Activated CD4-positive, alpha-beta T cell treated with anti-CD3 and anti-CD28 coated beads for 36 hours (primary cell): ENCODE measurements at regions of chr4 and their contacts with region 1.

Region 1: GRCh38 chr4:41214136-41214824 is at the start of gene APBB2:
- DNase-seq: peak; percentile 79
- ATAC-seq: peak; percentile 67
- H3K4me3 Mint-ChIP-seq: peak within 1 kb of the TSS; percentile 72
- H3K27ac Mint-ChIP-seq: no peak within 1 kb of the TSS
- H3K4me1 Mint-ChIP-seq: peaks cover 27% of the 10 kb centered on the region
- H3K27me3 Mint-ChIP-seq: peaks cover 58% of the 10 kb centered on the region
- total RNA-seq, gene APBB2: 1.3 to 1.5 TPM

Region 2: DNA sequence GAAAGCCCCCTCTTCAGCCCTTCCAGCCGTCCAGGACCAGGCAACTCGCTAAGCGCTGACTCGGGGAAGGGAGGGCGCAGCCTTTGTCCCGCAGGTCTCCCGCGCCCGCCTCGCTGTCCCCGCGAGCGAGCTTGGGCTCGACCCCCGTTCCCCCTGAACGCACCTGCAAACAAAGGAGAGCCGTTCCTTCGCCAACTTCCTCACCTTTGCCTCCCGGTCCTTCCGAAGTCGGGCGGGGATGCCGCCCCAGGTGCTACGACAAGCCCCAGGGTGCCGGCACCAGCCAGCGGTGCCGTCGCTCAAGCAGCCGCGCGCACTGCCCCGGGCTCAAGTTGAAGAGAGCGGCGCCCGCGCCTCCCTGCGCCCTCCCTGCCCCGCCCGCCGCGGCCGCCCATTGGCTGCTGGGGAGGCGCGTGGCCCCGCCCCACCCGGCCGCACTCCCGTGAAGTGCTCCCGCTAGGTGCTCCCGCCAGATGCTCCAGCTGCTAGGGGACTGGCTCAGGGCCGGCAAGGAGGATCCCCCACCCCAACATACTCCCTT is 357.4 kb before region 1 on chr4:
- CTCF ChIA-PET with region 1: no interaction called
- POLR2A ChIA-PET with region 1: no interaction called
- intact Hi-C with region 1: no loop called
- DNase-seq: peak; percentile 79
- ATAC-seq: peak; percentile 99
- H3K4me3 Mint-ChIP-seq: peak overlapping the region; percentile 61
- H3K27ac Mint-ChIP-seq: no peak overlapping the region
- H3K4me1 Mint-ChIP-seq: peaks cover 8% of the 10 kb centered on the region
- H3K27me3 Mint-ChIP-seq: peaks cover 46% of the 10 kb centered on the region

Region 3: GRCh38 chr4:40908702-40909362 is 305.4 kb before region 1 on chr4:
- CTCF ChIA-PET with region 1: interaction called, 3 read pairs
- POLR2A ChIA-PET with region 1: no interaction called
- intact Hi-C with region 1: loop called in 1 of 2 experiments (anchors 1 kb)
- DNase-seq: peak; percentile 90
- ATAC-seq: peak; percentile 85
- H3K4me3 Mint-ChIP-seq: peak overlapping the region; percentile 26
- H3K27ac Mint-ChIP-seq: peak overlapping the region; percentile 95
- H3K4me1 Mint-ChIP-seq: peaks cover 36% of the 10 kb centered on the region
- H3K27me3 Mint-ChIP-seq: no peaks in the 10 kb centered on the region

Region 4: GRCh38 chr4:40976343-40976742 is 237.9 kb before region 1 on chr4:
- CTCF ChIA-PET with region 1: interaction called, 9 read pairs
- POLR2A ChIA-PET with region 1: no interaction called
- intact Hi-C with region 1: loop called (anchors 1 to 2 kb)
- DNase-seq: peak; percentile 18
- ATAC-seq: no peak
- H3K4me3 Mint-ChIP-seq: no peak overlapping the region
- H3K27ac Mint-ChIP-seq: no peak overlapping the region
- H3K4me1 Mint-ChIP-seq: no peaks in the 10 kb centered on the region
- H3K27me3 Mint-ChIP-seq: peaks cover 16% of the 10 kb centered on the region

Region 5: DNA sequence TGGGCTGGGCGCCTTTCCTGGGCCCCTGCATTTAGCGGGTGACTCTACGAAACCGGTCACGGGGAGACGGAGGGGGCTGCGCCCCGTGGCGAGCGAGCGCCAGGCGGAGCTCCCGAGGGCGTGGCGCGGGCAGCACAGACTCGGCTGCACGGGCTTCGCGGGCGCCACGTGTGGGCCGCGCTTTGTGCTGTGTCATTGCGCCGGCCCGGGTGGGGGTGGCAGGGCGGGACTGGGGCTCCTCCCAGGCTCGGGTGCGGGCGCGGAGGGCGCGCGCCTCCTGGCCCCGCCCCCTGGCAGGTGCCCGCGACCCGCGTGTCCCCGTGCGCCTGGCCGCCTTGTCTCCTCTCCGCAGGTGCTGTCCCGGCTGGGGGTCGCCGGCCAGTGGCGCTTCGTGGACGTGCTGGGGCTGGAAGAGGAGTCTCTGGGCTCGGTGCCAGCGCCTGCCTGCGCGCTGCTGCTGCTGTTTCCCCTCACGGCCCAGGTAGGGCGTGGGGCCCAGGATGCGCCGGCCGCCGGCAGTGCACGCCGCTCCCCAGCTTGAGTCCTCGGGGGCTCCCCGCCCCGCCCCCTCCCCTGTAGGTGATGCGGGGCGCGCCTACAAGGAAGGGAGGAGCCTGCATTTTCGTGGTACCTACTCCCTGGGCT is 43.1 kb after region 1 on chr4:
- CTCF ChIA-PET with region 1: interaction called, 3 read pairs
- POLR2A ChIA-PET with region 1: no interaction called
- intact Hi-C with region 1: loop called in 1 of 2 experiments (anchors 2 kb)
- DNase-seq: peak; percentile 61
- ATAC-seq: peak; percentile 75
- H3K4me3 Mint-ChIP-seq: peak overlapping the region; percentile 60
- H3K27ac Mint-ChIP-seq: no peak overlapping the region
- H3K4me1 Mint-ChIP-seq: peaks cover 6% of the 10 kb centered on the region
- H3K27me3 Mint-ChIP-seq: peaks cover 48% of the 10 kb centered on the region

Region 6: DNA sequence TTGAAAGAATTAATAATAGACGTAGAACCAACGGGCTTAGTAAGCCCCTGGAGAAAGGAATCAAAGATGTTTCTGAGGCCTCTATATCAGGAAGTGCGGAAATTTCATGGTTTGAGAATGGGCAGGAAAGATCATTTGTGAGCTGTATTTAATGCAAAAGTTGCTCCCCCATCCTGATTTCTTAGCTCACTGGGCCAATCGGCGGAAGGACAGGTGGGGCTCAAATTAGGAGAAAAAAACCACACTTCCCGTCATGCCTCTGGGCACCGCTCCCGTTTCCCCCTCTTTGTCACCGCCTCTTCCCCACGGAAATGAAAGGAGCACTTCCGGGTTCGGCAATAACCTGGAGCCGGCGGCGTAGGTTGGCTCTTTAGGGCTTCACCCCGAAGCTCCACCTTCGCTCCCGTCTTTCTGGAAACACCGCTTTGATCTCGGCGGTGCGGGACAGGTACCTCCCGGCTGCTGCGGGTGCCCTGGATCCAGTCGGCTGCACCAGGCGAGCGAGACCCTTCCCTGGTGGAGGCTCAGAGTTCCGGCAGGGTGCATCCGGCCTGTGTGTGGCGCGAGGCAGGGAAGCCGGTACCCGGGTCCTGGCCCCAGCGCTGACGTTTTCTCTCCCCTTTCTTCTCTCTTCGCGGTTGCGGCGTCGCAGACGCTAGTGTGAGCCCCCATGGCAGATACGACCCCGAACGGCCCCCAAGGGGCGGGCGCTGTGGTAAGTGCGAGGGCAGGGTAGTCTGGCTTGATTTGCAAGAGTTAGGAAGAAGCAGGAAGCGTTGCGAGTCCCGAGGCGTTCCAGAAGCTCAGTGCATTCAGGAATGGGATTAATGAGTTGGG is 720.8 kb after region 1 on chr4 and contains the start of gene TMEM33:
- CTCF ChIA-PET with region 1: no interaction called
- POLR2A ChIA-PET with region 1: no interaction called
- intact Hi-C with region 1: loop called in 1 of 2 experiments (anchors 2 kb)
- DNase-seq: peak; percentile 85
- ATAC-seq: peak; percentile 86
- H3K4me3 Mint-ChIP-seq: peak within 1 kb of the TSS; percentile 97
- H3K27ac Mint-ChIP-seq: peak within 1 kb of the TSS; percentile 92
- H3K4me1 Mint-ChIP-seq: peaks cover 36% of the 10 kb centered on the region
- H3K27me3 Mint-ChIP-seq: no peaks in the 10 kb centered on the region
- total RNA-seq, gene TMEM33: 43.8 to 57.2 TPM

Region 7: DNA sequence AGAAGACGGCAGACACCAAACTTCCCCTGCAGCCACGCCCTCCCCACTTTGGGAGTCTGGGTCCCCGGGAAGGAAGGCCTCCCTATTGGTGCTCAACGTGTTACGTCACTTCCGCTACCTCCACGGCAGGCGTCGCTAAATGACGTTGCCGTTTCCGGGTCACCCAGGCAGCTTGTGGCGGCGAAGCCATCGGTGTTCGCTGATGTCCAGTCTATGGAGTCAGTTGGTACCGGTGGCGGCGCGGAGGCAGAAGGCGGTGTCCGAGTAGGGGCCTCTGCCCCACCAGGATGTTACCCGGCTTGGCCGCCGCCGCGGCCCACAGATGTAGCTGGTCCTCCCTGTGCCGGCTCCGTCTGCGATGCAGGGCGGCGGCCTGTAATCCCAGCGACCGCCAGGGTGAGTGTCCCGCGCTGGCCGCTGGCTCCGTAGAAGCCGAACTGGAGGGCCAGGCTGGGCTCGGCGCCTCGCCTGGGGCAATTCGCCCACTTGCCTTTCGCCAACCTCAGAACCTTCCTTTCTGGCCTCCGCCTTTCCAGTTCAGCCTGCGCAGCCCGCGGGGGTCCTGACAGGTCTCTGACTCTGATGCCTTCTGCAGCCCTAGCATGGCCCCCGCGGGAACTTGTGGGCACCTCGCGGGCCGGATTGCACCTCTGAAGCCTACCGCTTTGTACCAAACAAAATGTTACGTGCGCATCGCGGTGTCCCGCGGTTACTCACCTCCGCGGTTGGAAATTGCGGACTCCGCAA is 776.3 kb after region 1 on chr4 and contains the start of gene SLC30A9:
- CTCF ChIA-PET with region 1: no interaction called
- POLR2A ChIA-PET with region 1: no interaction called
- intact Hi-C with region 1: loop called in 1 of 2 experiments (anchors 10 kb)
- DNase-seq: peak; percentile 95
- ATAC-seq: peak; percentile 97
- H3K4me3 Mint-ChIP-seq: peak within 1 kb of the TSS; percentile 93
- H3K27ac Mint-ChIP-seq: peak within 1 kb of the TSS; percentile 97
- H3K4me1 Mint-ChIP-seq: peaks cover 25% of the 10 kb centered on the region
- H3K27me3 Mint-ChIP-seq: no peaks in the 10 kb centered on the region
- total RNA-seq, gene SLC30A9: 55.8 to 59.6 TPM